GM10248 (cell line): ENCODE measurements at regions of chr5 and their contacts with region 1.

Region 1: GRCh38 chr5:146965761-146966659 is 87.5 kb upstream of the PPP2R2B start:
- DNase-seq: peak; percentile 45
- CTCF ChIP-seq: peak; percentile 71

Region 2: GRCh38 chr5:146533260-146533857 is 432.7 kb before region 1 on chr5:
- CTCF ChIA-PET with region 1: interaction called, 61 read pairs
- POLR2A ChIA-PET with region 1: no interaction called
- DNase-seq: peak; percentile 73
- CTCF ChIP-seq: peak; percentile 83

Region 3: GRCh38 chr5:146541958-146542849 is 423.8 kb before region 1 on chr5:
- CTCF ChIA-PET with region 1: interaction called, 88 read pairs
- POLR2A ChIA-PET with region 1: no interaction called
- DNase-seq: peak; percentile 69
- CTCF ChIP-seq: peak; percentile 95

Region 4: DNA sequence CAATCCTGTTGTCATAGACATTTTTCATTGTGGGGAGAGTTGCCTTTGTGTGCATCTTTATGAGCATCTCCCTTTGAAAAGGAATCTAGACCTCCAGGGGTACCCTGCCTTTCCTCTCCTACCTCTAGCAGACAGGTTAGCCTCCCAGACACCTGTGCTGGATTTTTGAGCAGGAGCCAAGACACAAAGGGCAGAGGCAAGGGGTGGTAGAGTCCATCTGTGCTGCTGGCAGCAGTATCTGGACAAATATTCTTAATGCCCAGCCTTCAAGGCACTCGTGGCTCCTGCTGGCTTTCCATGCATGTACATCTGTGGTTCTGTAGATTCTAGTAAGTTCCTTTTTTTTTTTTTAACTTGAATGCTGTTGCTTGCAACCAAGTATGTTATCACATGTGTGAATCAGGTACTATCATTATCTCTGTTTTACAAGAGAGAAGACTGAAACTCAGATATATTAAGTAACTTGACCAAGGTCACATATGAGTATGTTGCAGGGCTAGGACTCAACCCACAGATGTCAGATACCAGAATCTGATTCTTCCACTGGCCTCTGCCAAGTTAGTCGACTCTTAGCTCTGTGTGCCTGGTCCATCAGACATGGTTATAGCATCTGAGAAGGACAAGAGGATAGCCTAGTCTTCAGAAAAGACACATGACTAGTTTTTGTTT is 417.1 kb before region 1 on chr5:
- CTCF ChIA-PET with region 1: interaction called, 88 read pairs
- POLR2A ChIA-PET with region 1: no interaction called
- DNase-seq: no peak
- CTCF ChIP-seq: no peak

Region 5: GRCh38 chr5:146565764-146566367 is 400.1 kb before region 1 on chr5:
- CTCF ChIA-PET with region 1: interaction called, 14 read pairs
- POLR2A ChIA-PET with region 1: no interaction called
- DNase-seq: peak; percentile 56
- CTCF ChIP-seq: peak; percentile 47

Region 6: DNA sequence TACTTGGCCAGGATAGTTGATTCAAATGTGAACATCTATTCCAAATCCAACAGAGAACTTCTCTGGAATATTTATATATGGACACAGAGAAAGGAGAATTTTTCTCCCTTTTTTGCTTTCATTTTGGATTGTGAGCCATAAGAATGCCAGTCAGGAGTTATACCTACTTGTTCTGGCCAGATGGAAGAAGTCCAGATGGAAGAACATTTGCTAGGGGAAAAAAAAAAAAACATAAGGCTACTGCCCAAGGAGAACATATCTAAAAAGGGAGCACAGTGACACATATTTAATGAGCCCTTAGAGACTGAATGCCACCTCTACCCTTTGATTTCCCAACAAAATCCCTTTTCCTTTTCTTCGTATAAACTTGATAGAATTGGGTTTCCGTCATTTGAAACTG is 25.7 kb before region 1 on chr5:
- CTCF ChIA-PET with region 1: no interaction called
- POLR2A ChIA-PET with region 1: no interaction called
- DNase-seq: no peak
- CTCF ChIP-seq: no peak

Region 7: DNA sequence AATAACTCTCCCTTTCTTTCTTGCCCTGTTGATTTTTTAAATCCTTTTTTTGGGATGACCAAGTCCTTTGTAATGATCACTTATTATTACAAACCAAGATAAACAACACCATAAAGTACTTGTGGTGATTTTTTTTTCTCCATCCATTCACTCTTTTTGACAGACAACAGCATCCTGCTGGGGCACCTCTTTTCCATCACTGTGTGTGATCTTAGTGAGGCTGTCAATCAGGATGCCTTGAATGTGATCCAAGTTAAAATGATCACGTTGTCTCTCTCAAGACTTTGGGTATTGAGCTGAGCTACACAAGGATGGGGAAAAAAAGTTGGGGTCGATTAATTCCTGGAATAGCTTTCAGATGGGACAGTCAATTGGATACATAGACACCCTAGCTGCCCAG is 13.8 kb before region 1 on chr5:
- CTCF ChIA-PET with region 1: interaction called, 19 read pairs
- POLR2A ChIA-PET with region 1: no interaction called
- DNase-seq: no peak
- CTCF ChIP-seq: no peak